Mammary epithelial cell (primary cell): ENCODE measurements at regions of chr2 and their contacts with region 1.

Region 1: DNA sequence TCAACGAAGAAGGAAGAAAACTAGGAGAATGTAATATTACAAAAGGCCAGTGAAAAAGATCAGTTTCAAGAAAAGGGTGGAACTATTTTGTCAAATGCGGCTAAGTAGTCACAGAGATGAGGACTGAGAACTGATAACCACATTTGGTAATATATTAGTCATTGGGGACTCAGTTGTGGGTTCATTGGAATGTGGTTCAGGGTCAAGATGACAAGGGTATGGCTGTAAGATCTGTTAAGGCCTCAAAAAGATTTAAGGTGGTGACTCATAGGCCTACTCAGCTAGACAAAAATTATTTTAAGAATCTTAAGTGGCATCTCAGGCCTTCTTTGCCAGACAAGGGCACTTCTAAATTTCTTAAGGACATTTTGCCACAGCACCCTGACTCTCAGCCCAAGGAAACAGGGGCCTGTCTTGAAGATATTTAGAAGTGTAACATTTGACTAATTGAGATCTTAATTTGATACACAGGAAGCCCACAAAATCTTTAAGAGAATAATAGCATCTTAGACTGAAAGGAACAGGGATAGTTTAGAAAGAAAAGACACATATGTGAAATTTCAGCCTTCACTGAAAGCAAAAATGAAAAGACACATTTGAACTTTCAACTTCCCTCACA is 81.3 kb downstream of the STRADB start:
- DNase-seq: peak; percentile 77
- H3K4me3 ChIP-seq: no peak overlapping the region
- H3K27ac ChIP-seq: no peak overlapping the region
- H3K4me1 ChIP-seq: no peaks in the 10 kb centered on the region
- H3K27me3 ChIP-seq: peaks cover 2% of the 10 kb centered on the region
- CTCF ChIP-seq: no peak

Region 2: DNA sequence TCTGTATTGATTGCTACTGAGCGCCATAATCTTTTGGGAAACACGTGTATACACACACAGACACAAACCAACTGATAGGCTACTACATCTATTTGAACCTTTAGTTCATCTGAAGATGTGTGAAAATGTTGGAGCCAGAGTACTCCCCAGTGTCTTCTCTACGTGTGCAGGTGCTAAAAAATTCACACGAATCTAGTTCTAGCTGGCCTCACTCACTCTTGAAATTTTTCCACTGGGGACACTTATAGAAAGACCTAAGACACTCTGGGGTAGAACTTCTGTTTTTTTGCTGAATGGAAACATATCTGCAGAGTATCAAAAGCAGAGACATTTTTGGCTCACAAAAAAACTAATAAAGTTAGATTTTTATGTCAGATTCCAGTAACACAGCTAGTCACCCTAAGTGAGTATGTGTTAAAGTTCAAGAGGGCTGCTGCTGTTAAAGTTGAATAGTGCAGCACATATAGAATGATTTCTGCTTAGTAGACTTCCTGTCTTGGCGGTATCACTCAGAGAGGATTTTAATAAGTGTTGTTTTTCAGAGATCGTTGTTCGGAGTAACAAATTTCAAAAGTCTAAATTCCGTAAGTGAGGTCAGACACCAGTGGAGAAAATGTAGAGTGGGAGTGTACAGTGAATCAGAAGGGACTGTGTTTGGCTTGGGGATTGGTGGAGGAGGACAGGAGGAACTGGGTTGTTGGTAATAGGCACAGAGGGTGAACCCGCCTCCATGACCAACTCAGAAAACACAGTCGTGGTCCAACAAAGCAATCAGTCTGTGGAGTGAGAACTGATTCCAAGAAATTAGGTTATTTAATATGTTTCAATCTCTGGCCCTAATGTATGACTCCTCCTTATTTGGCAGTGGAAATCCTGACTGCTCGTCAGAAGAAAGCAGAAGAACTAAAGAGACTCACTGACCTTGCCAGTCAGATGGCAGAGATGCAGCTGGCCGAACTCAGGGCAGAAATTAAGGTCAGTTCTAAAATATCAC is 1066.1 kb before region 1 on chr2:
- CTCF ChIA-PET with region 1: no interaction called
- dilution Hi-C with region 1: no loop called
- in situ Hi-C with region 1: no loop called
- intact Hi-C with region 1: no loop called
- DNase-seq: no peak
- H3K4me3 ChIP-seq: no peak overlapping the region
- H3K27ac ChIP-seq: no peak overlapping the region
- H3K4me1 ChIP-seq: no peaks in the 10 kb centered on the region
- H3K27me3 ChIP-seq: no peaks in the 10 kb centered on the region
- CTCF ChIP-seq: no peak

Region 3: DNA sequence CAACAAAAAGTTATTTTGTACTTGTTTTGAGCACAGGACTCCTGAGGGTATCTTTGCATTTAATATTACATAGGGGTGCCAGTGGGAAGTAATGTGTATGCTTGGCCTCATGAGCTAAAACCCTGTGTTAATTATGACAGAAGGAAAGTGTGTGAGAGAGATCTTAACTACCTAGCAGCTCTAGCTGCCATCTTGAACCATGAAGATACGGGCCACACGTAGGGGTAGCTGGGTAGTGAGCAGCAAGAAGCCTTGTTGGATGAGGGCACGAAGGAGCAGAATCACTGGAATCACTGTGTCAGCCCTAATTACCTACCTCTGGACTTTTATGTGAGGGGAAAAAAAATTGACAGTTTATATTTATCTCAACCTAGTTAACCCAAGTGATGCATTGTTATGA is 365.2 kb before region 1 on chr2:
- CTCF ChIA-PET with region 1: no interaction called
- dilution Hi-C with region 1: no loop called
- in situ Hi-C with region 1: no loop called
- intact Hi-C with region 1: no loop called
- DNase-seq: no peak
- H3K4me3 ChIP-seq: no peak overlapping the region
- H3K27ac ChIP-seq: no peak overlapping the region
- H3K4me1 ChIP-seq: no peaks in the 10 kb centered on the region
- H3K27me3 ChIP-seq: no peaks in the 10 kb centered on the region
- CTCF ChIP-seq: no peak

Region 4: GRCh38 chr2:201633661-201634249 is 101.0 kb after region 1 on chr2:
- CTCF ChIA-PET with region 1: no interaction called
- dilution Hi-C with region 1: loop called (anchors 5 kb)
- in situ Hi-C with region 1: no loop called
- intact Hi-C with region 1: no loop called
- DNase-seq: no peak
- H3K4me3 ChIP-seq: no peak overlapping the region
- H3K27ac ChIP-seq: no peak overlapping the region
- H3K4me1 ChIP-seq: no peaks in the 10 kb centered on the region
- H3K27me3 ChIP-seq: no peaks in the 10 kb centered on the region
- CTCF ChIP-seq: no peak